Activated naive CD4-positive, alpha-beta T cell treated with anti-CD3 and anti-CD28 coated beads, Interleukin-2, amount 10 ng/mL, durations not matched to agents 7 days and 5 days (primary cell): ENCODE measurements at regions of chr12 and their contacts with region 1.

Region 1: DNA sequence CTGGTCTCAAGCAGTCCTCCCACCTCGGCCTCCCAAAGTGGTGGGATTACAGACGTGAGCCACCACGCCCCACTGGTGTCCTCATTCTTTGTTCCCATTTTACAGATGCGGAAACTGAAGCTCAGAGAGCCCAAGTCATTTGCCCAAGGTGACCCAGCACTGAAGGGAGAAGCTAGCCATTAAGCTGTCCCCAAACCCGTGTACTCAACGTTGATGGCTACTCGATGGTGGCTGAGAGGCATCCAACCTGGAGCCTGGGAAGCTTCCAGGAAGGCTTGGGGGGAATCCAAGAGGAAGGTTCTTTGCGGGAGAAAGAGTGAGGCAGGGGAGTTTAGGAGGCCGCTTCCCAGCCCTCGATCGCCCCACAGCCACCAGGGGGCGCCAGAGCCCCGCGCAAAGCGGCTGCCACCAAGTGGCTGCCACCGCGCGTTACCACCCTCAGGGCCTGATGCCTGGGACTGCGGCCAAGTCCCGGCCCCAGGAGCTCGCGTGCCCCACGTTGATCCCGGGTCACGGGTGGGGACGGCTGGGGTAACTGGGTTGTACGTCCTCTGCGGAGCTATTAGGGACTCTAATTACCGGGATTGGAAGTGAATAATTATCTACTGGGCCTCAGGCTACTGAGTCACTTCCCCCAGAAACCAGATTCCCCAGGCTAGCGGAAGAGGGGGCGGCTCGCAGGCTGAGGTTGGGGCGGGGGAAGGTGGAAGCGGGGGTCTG is 8.8 kb upstream of the SH2B3 start:
- DNase-seq: peak; percentile 89
- H3K4me3 Mint-ChIP-seq: peak overlapping the region; percentile 45
- H3K27ac Mint-ChIP-seq: no peak overlapping the region
- H3K4me1 Mint-ChIP-seq: peaks cover 22% of the 10 kb centered on the region
- H3K27me3 Mint-ChIP-seq: peaks cover 21% of the 10 kb centered on the region

Region 2: DNA sequence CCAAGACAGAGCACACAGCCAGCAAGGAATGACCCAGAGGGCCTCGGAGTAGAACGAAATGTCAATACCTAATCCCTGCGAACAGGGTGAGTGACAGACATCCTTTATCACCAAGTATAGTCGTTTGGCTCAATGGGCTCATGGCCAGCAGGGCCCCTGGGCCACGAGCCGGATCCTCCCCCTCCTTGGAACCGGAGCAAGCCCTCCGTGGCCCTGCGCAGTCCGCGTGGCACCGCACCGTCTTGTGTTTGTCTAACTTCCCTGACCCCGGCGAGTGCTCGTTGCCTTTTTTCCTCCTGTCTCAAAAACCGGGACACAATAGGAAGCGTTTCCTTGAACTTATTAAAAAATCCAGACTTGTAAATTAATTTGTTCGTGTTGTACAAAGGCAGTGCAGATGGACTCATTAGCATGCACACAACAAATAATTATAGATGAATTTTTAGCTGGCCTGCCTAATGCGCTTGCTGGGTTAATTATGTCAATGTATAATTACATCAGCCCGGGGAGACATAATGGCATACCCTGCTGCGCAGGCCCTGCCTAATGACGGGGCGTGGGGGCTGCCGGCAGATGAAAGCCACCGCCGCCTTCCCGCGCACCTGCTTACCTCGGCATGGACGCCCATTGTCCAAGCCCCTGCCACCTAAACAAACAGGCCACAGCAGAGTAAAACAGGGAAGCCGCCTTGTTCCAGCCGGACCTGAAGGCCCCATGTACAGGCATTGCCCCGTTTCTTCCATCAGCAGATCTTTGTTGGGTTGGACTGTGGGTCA is 109.6 kb before region 1 on chr12:
- CTCF ChIA-PET with region 1: no interaction called
- DNase-seq: no peak
- H3K4me3 Mint-ChIP-seq: no peak overlapping the region
- H3K27ac Mint-ChIP-seq: no peak overlapping the region
- H3K4me1 Mint-ChIP-seq: no peaks in the 10 kb centered on the region
- H3K27me3 Mint-ChIP-seq: no peaks in the 10 kb centered on the region

Region 3: GRCh38 chr12:111368788-111369495 is 27.9 kb before region 1 on chr12 and contains the start of gene PHETA1:
- CTCF ChIA-PET with region 1: interaction called, 18 read pairs
- DNase-seq: peak; percentile 88
- H3K4me3 Mint-ChIP-seq: peak within 1 kb of the TSS; percentile 80
- H3K27ac Mint-ChIP-seq: peak within 1 kb of the TSS; percentile 11
- H3K4me1 Mint-ChIP-seq: peaks cover 22% of the 10 kb centered on the region
- H3K27me3 Mint-ChIP-seq: peaks cover 39% of the 10 kb centered on the region

Region 4: DNA sequence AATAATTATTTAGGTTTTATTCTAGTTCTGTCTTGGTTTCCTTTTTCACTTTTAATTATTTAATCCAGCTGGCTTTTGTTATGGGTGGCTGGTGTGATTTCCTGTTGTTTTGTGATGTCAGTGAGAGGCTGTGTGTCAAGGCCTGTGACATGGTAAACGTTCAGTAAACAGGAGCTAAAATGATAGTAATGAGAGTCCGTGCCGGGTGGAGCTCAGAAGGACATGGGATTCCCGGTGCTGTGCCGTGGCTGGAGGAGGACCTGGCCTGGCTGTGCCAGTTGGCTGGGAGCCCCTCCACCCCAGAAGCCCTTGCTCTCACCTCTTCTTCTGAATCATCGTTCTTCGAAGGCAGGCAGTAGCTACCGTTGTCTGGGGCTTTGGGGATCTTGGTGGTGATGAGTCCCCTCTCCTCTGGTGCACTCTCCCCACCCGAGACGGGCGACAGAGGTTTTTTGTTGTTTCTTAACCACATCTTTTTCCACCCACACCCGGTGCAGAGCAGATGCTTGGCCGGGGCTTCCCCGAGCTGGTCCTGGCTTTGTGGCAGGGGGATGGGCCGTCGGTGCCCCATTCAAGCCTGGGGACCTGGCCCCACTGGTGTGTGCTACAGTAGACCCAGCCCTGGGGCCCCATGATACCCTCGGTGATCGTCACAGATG is 37.9 kb after region 1 on chr12:
- CTCF ChIA-PET with region 1: interaction called, 757 read pairs
- DNase-seq: peak; percentile 89
- H3K4me3 Mint-ChIP-seq: peak overlapping the region; percentile 75
- H3K27ac Mint-ChIP-seq: peak overlapping the region; percentile 100
- H3K4me1 Mint-ChIP-seq: peaks cover 92% of the 10 kb centered on the region
- H3K27me3 Mint-ChIP-seq: peaks cover 8% of the 10 kb centered on the region

Region 5: GRCh38 chr12:111482462-111482861 is 85.6 kb after region 1 on chr12:
- CTCF ChIA-PET with region 1: interaction called, 20 read pairs
- DNase-seq: no peak
- H3K4me3 Mint-ChIP-seq: no peak overlapping the region
- H3K27ac Mint-ChIP-seq: no peak overlapping the region
- H3K4me1 Mint-ChIP-seq: no peaks in the 10 kb centered on the region
- H3K27me3 Mint-ChIP-seq: no peaks in the 10 kb centered on the region

Region 6: DNA sequence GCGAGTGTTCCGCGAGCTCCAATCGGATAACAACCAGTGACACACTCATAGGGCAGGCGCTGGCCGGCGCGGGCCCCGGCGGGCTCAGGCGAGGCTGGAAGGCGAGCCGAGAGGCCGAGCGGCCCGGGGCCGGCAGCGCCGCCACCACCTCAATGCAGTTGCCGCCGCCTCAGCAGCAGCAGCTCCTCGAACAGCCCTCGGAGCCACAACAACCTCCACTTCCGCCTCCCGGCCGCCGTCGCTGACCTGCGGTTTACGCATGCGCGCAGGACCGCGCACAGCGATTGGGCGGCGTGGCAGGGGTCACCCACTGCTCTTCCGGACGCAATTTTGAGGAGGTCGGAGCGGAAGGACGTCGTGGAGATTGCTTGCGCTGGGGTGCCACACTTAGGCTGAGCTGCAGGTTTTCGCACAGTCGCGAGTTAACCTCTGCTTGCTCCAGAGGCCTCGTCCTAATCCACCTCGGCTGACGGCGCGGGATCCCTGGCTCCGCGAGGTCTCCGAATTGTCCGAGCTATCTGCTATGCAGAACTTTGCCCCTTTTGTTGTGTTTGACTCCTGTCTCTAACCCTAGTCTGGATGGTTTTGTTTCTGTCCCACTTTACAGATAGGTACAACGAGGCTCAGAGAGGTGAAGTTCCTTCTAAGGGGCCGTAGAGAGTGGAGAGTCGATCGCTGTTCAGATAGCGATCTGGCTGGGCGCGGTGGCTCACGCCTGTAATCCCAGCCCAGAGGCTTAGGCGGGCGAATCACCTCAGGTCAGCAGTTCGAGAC is 289.0 kb after region 1 on chr12 and contains the starts of genes ACAD10 and BRAP:
- CTCF ChIA-PET with region 1: interaction called, 10 read pairs
- DNase-seq: peak; percentile 95
- H3K4me3 Mint-ChIP-seq: peak within 1 kb of the TSS; percentile 97
- H3K27ac Mint-ChIP-seq: peak within 1 kb of the TSS; percentile 97
- H3K4me1 Mint-ChIP-seq: peaks cover 38% of the 10 kb centered on the region
- H3K27me3 Mint-ChIP-seq: peaks cover 4% of the 10 kb centered on the region